Activated CD4-positive, alpha-beta T cell treated with anti-CD3 and anti-CD28 coated beads, Interleukin-2, amount 10 ng/mL, durations not matched to agents 7 days and 5 days (primary cell): ENCODE measurements at regions of chr2 and their contacts with region 1.

Region 1: GRCh38 chr2:88659538-88659916 is 31.9 kb upstream of the RPIA start:
- DNase-seq: no peak
- H3K4me3 Mint-ChIP-seq: no peak overlapping the region
- H3K27ac Mint-ChIP-seq: no peak overlapping the region
- H3K4me1 Mint-ChIP-seq: no peaks in the 10 kb centered on the region
- H3K27me3 Mint-ChIP-seq: peaks cover 2% of the 10 kb centered on the region

Region 2: DNA sequence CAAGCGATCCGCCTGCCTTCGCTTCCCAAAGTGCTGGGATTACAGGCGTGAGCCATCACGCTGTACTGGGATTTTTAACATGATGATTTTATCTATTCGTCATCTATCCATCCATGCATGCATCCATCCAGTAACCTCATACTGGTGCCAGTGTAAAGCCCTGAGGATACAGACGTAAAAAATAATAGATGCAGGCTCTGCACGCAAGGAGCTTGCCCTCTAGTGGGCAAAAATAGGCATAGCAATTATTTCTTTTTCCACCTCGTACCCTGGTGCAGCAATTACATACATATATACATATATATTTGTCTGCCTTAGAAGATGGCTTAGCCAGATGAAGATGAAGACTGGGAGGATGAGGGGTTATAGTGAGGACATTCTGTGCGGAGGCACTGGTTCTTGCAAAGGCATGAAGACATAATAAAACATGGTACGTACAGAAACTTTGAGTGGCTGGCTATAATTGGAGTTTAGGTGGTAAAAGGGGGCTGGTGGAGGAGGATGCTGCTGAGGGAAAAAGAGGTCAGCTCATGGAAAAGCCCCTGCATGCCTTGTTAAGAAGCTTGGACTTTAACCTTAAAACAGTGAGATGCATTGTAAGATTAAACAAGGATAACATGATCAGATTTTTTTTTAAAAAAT is 12.4 kb after region 1 on chr2:
- CTCF ChIA-PET with region 1: interaction called, 10 read pairs
- POLR2A ChIA-PET with region 1: no interaction called
- DNase-seq: peak; percentile 18
- H3K4me3 Mint-ChIP-seq: no peak overlapping the region
- H3K27ac Mint-ChIP-seq: no peak overlapping the region
- H3K4me1 Mint-ChIP-seq: no peaks in the 10 kb centered on the region
- H3K27me3 Mint-ChIP-seq: peaks cover 2% of the 10 kb centered on the region